Common myeloid progenitor, CD34-positive (primary cell): ENCODE measurements at regions of chr2 and their contacts with region 1.

Region 1: DNA sequence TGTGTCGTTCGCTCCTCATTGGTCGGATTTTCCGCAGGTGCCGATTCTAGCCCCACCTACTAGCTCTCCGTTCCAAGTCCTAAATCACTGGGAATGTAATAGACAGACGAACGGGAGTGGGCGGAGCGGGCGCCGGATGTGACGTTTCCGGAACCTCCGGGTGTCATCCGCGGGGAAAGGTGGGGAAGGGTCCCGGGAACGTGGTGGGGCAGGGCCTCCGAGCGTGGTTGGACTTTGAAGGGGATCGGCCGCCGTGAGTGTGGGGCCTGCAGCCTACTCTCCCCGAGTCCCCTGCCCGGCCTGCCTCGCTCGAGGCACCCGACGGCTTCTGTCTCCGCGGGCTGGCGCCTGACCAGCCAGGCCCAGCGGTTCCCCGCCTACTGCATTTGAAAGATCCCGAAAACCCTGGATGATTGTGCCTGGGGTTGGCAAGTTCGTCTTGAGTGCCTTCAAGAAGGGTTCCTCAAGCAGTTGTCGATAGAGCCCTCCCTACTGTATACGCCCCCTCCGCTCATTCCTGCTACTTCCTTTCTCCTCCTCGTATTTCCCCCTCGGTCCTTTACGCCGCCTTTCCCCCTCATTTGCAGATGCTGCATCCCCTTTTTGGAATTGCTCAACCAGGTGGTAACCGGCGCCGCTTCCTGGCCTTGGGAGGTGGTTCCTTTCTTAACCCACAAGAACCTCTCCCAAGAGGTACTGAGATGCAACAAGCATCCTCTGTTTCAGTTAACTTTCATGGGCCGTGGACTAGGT is at the start of gene STAMBP:
- DNase-seq: peak; percentile 97 to 99 (median 98)
- H3K4me3 ChIP-seq: peak within 1 kb of the TSS; percentile 89 to 98 (median 95)
- H3K27ac ChIP-seq: peak within 1 kb of the TSS; percentile 91 to 97
- H3K4me1 ChIP-seq: peaks cover 13 to 31% (median 22%) of the 10 kb centered on the region in 4 experiments
- H3K27me3 ChIP-seq: no peaks in the 10 kb centered on the region

Region 2: GRCh38 chr2:73359915-73360697 is 468.9 kb before region 1 on chr2:
- CTCF ChIA-PET with region 1: no interaction called
- POLR2A ChIA-PET with region 1: no interaction called
- DNase-seq: no peak
- H3K4me3 ChIP-seq: no peak overlapping the region
- H3K27ac ChIP-seq: no peak overlapping the region
- H3K4me1 ChIP-seq: no peaks in the 10 kb centered on the region
- H3K27me3 ChIP-seq: peaks cover 0 to 2% (median 0%) of the 10 kb centered on the region in 5 experiments

Region 3: GRCh38 chr2:73468376-73468775 is 360.6 kb before region 1 on chr2:
- CTCF ChIA-PET with region 1: no interaction called
- POLR2A ChIA-PET with region 1: no interaction called
- DNase-seq: no peak
- H3K4me3 ChIP-seq: no peak overlapping the region
- H3K27ac ChIP-seq: no peak overlapping the region
- H3K4me1 ChIP-seq: no peaks in the 10 kb centered on the region
- H3K27me3 ChIP-seq: no peaks in the 10 kb centered on the region

Region 4: GRCh38 chr2:73685770-73686438 is 143.1 kb before region 1 on chr2:
- CTCF ChIA-PET with region 1: no interaction called
- POLR2A ChIA-PET with region 1: no interaction called
- DNase-seq: no peak
- H3K4me3 ChIP-seq: no peak overlapping the region
- H3K27ac ChIP-seq: peak overlapping the region in 1 of 2 experiments; percentile 17
- H3K4me1 ChIP-seq: peaks cover 0 to 15% (median 11%) of the 10 kb centered on the region in 4 experiments
- H3K27me3 ChIP-seq: no peaks in the 10 kb centered on the region

Region 5: DNA sequence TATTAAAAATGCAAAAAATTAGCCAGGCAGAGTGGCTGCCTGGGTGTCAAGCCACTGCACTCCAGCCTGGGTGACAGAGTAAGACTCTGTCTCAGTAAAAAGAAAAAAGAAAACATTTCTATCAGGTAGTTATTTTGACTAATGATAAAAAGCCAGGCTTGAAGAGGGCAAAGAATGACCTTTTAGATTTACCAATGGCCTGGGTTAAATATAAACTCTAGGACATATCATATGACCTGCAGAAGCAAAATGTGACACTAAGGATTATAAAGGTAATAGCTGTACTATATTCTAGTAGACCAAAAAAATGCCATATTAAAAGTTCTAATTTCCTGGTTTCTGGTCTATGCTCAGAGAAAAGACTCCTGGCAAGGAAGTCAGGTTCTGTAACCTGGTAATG is 16.4 kb before region 1 on chr2:
- CTCF ChIA-PET with region 1: interaction called, 18 read pairs
- POLR2A ChIA-PET with region 1: no interaction called
- DNase-seq: no peak
- H3K4me3 ChIP-seq: no peak overlapping the region
- H3K27ac ChIP-seq: no peak overlapping the region
- H3K4me1 ChIP-seq: no peaks in the 10 kb centered on the region
- H3K27me3 ChIP-seq: no peaks in the 10 kb centered on the region

Region 6: DNA sequence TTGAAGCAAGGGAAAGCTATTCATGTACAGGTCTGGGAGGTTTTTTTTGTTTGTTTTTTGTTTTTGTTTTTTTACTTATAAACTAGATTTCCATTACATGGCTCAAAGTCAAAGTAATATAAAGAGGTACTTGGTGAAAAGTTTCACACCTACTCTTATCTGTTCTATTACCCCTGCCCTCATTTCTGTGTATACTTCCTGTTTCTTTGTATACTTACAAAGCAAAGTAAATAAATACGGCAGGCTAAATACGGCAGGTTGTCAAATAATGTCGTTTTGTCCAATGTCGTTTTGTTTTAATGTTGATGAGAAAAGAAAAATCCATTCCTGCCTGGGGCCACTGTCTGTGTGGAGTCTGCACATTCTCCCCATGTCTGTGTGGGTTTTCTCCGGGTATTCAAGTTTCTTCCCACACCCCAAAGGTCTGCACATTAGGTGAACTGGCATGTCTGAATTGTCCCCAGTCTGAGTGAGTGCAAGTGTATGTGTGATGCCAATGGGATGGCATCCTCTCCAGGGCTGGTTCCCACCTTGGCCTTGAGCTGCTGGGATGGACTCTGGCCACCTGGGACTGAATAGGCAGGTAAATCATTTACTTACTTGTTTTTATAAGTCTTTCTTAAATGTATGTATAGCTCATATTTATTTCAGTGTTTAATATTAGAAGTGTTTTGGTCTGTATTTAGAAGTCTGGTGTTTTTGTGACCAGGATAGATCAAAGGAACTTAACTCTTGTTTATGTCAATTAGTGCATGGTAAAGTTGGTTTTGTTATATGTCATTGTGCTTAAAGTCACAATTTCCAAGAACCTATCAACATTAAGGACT is 13.1 kb after region 1 on chr2:
- CTCF ChIA-PET with region 1: interaction called, 24 read pairs
- POLR2A ChIA-PET with region 1: no interaction called
- DNase-seq: no peak
- H3K4me3 ChIP-seq: no peak overlapping the region
- H3K27ac ChIP-seq: no peak overlapping the region
- H3K4me1 ChIP-seq: peaks cover 3 to 23% (median 10%) of the 10 kb centered on the region in 4 experiments
- H3K27me3 ChIP-seq: no peaks in the 10 kb centered on the region

Region 7: GRCh38 chr2:73890301-73891092 is 61.5 kb after region 1 on chr2:
- CTCF ChIA-PET with region 1: no interaction called
- POLR2A ChIA-PET with region 1: no interaction called
- DNase-seq: no peak
- H3K4me3 ChIP-seq: no peak overlapping the region
- H3K27ac ChIP-seq: no peak overlapping the region
- H3K4me1 ChIP-seq: peaks cover 0 to 2% (median 0%) of the 10 kb centered on the region in 4 experiments
- H3K27me3 ChIP-seq: no peaks in the 10 kb centered on the region

Region 8: GRCh38 chr2:73985308-73986084 is 156.5 kb after region 1 on chr2:
- CTCF ChIA-PET with region 1: interaction called, 11 read pairs
- POLR2A ChIA-PET with region 1: no interaction called
- DNase-seq: peak in 2 of 3 donors; percentile 38 to 58
- H3K4me3 ChIP-seq: peak overlapping the region; percentile 36 to 77 (median 73)
- H3K27ac ChIP-seq: peak overlapping the region in 1 of 2 experiments; percentile 74
- H3K4me1 ChIP-seq: peaks cover 23 to 74% (median 61%) of the 10 kb centered on the region in 4 experiments
- H3K27me3 ChIP-seq: no peaks in the 10 kb centered on the region

Region 9: GRCh38 chr2:74104839-74105238 is 275.8 kb after region 1 on chr2:
- CTCF ChIA-PET with region 1: interaction called, 13 read pairs
- POLR2A ChIA-PET with region 1: no interaction called
- DNase-seq: peak in 2 of 3 donors; percentile 39 to 46
- H3K4me3 ChIP-seq: no peak overlapping the region
- H3K27ac ChIP-seq: no peak overlapping the region
- H3K4me1 ChIP-seq: no peaks in the 10 kb centered on the region
- H3K27me3 ChIP-seq: no peaks in the 10 kb centered on the region

Region 10: DNA sequence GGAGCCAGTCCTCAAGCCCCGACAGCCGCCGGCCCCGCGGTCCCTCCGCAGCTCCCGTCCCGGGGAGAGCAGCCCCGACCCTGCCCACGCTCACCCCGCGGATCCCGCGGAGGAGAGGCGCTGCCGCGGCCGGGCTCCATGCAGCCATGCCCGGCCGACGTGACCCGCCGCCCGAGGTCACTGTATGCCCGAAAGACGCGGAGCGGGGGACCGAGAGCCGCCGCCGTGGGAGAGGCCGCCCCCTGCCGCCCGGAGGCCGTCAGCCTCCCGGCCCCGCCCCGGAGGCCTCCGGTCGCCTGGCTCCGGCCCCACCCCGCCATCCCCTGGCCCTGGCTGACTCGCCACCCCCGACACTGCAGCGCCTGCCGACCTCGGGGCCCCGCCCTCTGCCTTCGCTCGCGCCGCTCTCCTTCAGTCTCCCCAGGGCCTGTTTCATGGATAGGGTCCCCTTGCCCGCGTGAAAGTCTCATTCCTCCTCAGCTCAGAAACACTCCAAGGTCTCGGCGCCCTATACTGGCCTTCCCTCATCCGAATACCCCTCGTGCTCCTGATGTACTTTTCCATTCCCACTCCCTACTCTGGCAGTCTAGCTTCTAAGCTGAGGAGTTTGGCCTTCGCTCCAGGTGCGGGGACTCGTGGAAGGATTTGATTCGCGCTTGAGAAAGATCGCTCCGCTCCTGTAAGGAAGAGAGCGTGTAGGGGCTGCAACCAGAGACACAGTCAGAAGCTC is 318.9 kb after region 1 on chr2 and contains the start of gene BOLA3:
- CTCF ChIA-PET with region 1: interaction called, 35 read pairs
- POLR2A ChIA-PET with region 1: no interaction called
- DNase-seq: peak; percentile 79 to 90 (median 87)
- H3K4me3 ChIP-seq: peak within 1 kb of the TSS; percentile 71 to 94 (median 84)
- H3K27ac ChIP-seq: peak within 1 kb of the TSS in 1 of 2 experiments; percentile 73
- H3K4me1 ChIP-seq: peaks cover 7 to 31% (median 21%) of the 10 kb centered on the region in 4 experiments
- H3K27me3 ChIP-seq: no peaks in the 10 kb centered on the region

Region 11: GRCh38 chr2:74334931-74335333 is 505.9 kb after region 1 on chr2:
- CTCF ChIA-PET with region 1: interaction called, 10 read pairs
- POLR2A ChIA-PET with region 1: no interaction called
- DNase-seq: peak; percentile 51 to 71 (median 60)
- H3K4me3 ChIP-seq: no peak overlapping the region
- H3K27ac ChIP-seq: no peak overlapping the region
- H3K4me1 ChIP-seq: peaks cover 0 to 2% (median 0%) of the 10 kb centered on the region in 4 experiments
- H3K27me3 ChIP-seq: no peaks in the 10 kb centered on the region